ENCODE measurements at regions of chr15 and their contacts with region 1.

Region 1: DNA sequence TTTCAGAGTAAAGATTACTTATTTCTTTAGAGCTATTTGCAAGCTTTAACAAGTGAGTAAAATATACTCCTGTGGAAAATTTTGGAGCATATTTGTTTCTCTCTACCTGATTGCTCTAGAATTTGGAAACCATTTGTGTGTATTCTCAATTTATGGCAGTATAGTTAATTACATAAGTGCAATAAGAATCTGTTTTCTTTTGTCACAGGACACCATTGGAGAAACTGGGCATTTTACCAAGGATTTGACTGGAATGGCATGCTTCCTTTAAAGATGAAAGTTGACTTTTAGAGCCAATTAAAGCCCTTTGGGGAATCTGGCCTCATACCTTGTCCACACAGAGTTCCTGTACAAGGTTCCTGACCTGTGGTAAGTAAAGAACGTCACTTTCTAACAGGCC is 38.4 kb downstream of the PAQR5 start:
- DNase-seq: no peak
- H3K4me3 ChIP-seq: no peak overlapping the region
- H3K27ac ChIP-seq: no peak overlapping the region
- H3K4me1 ChIP-seq: no peaks in the 10 kb centered on the region
- H3K27me3 ChIP-seq: no peaks in the 10 kb centered on the region
- CTCF ChIP-seq: no peak
- EP300 ChIP-seq: no peak
- POLR2A ChIP-seq: no peak

Region 2: DNA sequence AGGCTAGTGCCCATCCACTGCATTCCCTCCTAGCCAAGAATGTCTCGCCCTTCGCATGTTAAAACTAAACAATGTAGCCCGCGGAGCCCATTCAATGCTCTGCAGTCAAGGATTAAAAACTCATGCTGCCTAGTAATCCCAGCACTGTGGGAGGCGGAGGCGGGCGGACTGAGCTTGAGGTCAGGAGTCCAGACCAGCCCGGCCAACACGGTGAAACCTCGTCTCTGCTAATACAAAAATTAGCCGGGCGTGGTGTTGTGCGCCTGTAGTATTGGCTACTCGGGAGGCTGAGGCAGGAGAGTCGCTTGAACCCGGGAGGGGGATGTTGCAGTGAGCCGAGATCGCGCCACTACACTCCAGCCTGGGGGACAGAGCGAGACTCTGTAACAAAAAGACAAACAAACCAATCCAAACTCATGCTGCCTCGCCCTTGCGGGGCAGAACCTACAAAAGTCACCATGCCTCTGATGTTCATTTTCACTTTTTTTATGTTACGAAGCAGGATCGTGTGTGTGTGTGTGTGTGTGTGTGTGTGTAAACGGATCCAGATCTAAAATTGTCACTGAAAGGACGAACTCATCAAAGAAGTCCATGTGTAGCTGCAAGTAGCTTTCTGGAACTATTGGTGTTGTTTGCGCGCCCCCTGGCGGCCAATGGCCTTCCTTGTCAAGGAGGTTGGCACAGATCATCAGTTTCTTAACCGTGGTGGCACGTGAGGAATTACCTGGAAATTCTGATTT is 461.6 kb before region 1 on chr15:
- in situ Hi-C with region 1: no loop called
- intact Hi-C with region 1: no loop called
- DNase-seq: peak; percentile 94
- H3K4me3 ChIP-seq: peak overlapping the region in 3 of 4 donors; percentile 15 to 38 (median 30)
- H3K27ac ChIP-seq: no peak overlapping the region
- H3K4me1 ChIP-seq: peaks cover 0 to 4% (median 2%) of the 10 kb centered on the region in 4 donors
- H3K27me3 ChIP-seq: peaks cover 18% of the 10 kb centered on the region
- CTCF ChIP-seq: peak; percentile 85 to 94 (median 91)
- EP300 ChIP-seq: no peak
- POLR2A ChIP-seq: no peak

Region 3: GRCh38 chr15:69386284-69386683 is 49.2 kb after region 1 on chr15:
- in situ Hi-C with region 1: no loop called
- intact Hi-C with region 1: loop called (anchors 1 kb)
- DNase-seq: no peak
- H3K4me3 ChIP-seq: no peak overlapping the region
- H3K27ac ChIP-seq: no peak overlapping the region
- H3K4me1 ChIP-seq: no peaks in the 10 kb centered on the region
- H3K27me3 ChIP-seq: no peaks in the 10 kb centered on the region
- CTCF ChIP-seq: no peak
- EP300 ChIP-seq: no peak
- POLR2A ChIP-seq: no peak

Region 4: GRCh38 chr15:70775160-70775559 is 1438.0 kb after region 1 on chr15:
- in situ Hi-C with region 1: no loop called
- intact Hi-C with region 1: no loop called
- DNase-seq: no peak
- H3K4me3 ChIP-seq: no peak overlapping the region
- H3K27ac ChIP-seq: no peak overlapping the region
- H3K4me1 ChIP-seq: no peaks in the 10 kb centered on the region
- H3K27me3 ChIP-seq: no peaks in the 10 kb centered on the region
- CTCF ChIP-seq: no peak
- EP300 ChIP-seq: no peak
- POLR2A ChIP-seq: no peak